ENCODE measurements at regions of chr14 and their contacts with region 1.

Region 1: DNA sequence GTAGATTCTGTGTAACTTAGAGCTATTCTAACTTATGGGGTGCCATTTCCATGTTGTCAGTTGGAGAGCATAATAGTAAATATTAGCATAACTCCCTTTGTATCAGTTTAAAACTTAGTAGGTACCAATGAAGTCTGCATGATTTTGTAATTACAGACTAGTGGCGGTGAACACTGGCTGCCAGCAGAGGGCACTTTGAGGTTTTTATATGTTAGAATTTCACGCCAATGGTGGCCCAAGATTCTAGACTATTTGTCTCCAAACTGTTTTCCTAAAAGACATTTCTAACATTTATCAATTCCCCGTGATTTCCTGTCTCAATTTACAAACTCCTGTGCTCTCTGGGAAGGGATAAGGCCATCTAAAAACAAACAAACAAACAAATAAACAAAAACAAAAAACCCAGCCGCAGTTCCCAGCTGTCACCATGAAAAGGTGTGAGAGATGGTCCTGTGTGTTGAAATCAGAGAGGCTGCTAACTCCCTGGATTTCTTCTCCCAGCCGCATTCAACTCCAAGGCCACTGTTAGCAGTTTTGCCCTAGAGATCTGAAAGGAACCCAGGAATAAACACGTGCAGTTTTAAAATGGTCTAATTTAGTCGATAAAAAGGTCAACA is 57.6 kb downstream of the BRMS1L start:
- DNase-seq: peak; percentile 68
- H3K4me3 Mint-ChIP-seq: no peak overlapping the region
- H3K27ac Mint-ChIP-seq: no peak overlapping the region
- H3K4me1 Mint-ChIP-seq: peaks cover under 1% of the 10 kb centered on the region
- H3K27me3 Mint-ChIP-seq: peaks cover 13% of the 10 kb centered on the region

Region 2: DNA sequence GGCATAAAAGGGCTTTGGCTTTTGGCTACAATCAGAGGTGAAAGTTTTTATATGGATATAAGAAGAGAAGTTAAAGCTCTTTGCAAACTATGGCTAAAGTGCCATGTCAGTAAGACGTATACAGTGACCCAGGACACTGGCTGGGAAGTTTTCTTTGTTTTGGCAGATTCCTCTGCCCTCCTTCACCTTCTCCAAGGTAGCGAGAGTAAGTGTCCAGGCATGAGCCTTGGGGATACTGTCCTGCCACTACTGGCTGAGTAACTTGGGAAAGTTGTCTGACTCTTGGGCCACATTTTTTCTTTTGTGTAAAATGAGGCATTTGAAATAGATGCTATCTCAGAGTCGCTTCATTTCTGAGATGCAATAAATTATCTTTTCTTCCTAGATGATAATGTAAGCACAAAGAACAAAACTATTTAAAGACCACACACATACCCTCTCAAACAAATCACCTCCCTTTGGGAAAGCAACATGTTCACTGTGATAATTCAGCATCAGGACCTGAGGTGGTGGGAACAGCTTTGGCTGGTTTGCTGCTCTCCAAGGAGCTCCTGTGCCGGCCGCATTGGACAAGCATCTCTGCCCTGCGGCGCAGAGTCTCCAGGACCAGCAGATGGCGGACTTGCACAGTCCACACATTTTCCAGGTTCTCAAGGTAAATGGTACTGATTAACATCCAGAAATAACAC is 186.4 kb after region 1 on chr14:
- intact Hi-C with region 1: loop called (anchors 2 kb)
- DNase-seq: peak; percentile 78
- H3K4me3 Mint-ChIP-seq: no peak overlapping the region
- H3K27ac Mint-ChIP-seq: no peak overlapping the region
- H3K4me1 Mint-ChIP-seq: no peaks in the 10 kb centered on the region
- H3K27me3 Mint-ChIP-seq: peaks cover 23% of the 10 kb centered on the region